B cell (primary cell): ENCODE measurements at regions of chr16 and their contacts with region 1.

Region 1: DNA sequence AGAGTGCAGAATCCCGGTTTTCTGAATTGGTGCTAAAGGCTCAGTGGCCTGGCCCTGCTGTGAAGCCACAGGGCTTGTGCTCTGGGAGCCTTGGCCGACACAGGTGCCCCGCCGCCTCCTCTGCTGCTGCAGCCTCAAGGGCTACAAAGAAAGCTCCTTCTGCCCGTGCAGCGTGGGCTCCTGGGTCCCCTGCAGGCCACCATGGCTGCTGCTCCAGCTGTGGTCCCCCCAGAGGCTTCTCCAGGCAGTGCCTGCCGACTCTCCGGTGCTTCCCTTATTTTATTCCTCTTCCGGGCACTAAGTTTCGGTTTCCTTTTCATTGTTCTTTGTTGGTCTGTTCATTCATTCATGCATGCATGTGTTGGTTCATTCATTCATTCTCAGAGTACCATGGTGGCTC is 53.1 kb downstream of the CMIP start:
- DNase-seq: peak; percentile 72
- ATAC-seq: no peak
- H3K4me3 ChIP-seq: peak overlapping the region in 1 of 5 experiments; percentile 3
- H3K4me3 Mint-ChIP-seq: peak overlapping the region; percentile 29
- H3K27ac ChIP-seq: no peak overlapping the region
- H3K27ac Mint-ChIP-seq: peak overlapping the region; percentile 6
- H3K4me1 ChIP-seq: peaks cover 63 to 79% of the 10 kb centered on the region in 2 donors
- H3K4me1 Mint-ChIP-seq: peaks cover 86% of the 10 kb centered on the region
- H3K27me3 ChIP-seq: no peaks in the 10 kb centered on the region
- H3K27me3 Mint-ChIP-seq: no peaks in the 10 kb centered on the region
- CTCF ChIP-seq: peak; percentile 31

Region 2: DNA sequence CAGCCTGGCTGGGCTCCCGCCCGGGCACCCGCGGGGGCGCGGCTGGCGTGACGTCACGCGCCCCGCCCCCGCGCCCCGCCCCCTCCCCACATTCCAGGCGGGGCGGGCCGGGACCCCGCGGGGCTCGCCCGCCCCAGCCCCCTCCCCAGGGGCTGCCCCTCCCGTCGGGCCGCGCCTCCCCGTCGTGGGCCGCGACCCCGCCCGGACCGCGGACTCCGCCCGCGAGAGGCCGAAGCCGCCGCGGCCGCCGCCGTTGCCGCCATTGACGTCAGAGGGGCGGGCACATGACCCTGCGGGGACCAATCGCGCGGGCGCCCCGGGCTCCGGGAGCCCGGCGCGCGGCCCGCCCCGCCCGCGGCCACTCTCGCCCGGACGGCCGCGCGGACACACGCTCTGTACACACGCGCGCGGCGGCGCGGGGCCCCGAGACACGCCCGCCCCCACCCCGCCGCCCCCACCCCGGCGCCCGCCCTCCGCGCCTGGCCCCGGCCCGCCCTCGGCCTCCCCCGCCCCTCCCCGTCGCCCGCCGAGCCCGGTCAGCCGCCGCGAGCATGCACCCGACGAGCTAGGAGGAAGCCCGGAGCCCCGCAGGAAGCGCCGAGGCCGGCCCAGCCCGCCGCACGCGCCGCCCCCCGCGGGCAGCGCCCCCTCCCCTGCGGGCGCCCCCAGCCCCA is 53.1 kb before region 1 on chr16 and contains the start of gene CMIP:
- CTCF ChIA-PET with region 1: interaction called, 7 read pairs
- POLR2A ChIA-PET with region 1: interaction called, 6 read pairs
- intact Hi-C with region 1: loop called (anchors 1 kb)
- DNase-seq: peak; percentile 91
- ATAC-seq: peak; percentile 85
- H3K4me3 ChIP-seq: peak within 1 kb of the TSS; percentile 68 to 90 (median 80)
- H3K4me3 Mint-ChIP-seq: peak within 1 kb of the TSS; percentile 91
- H3K27ac ChIP-seq: peak within 1 kb of the TSS; percentile 57 to 77
- H3K27ac Mint-ChIP-seq: peak within 1 kb of the TSS; percentile 91
- H3K4me1 ChIP-seq: peaks cover 36 to 47% of the 10 kb centered on the region in 2 donors
- H3K4me1 Mint-ChIP-seq: peaks cover 43% of the 10 kb centered on the region
- H3K27me3 ChIP-seq: no peaks in the 10 kb centered on the region
- H3K27me3 Mint-ChIP-seq: no peaks in the 10 kb centered on the region
- CTCF ChIP-seq: no peak
- total RNA-seq, gene CMIP: 155 and 168 TPM in 2 replicates

Region 3: GRCh38 chr16:81513204-81514040 is 15.7 kb after region 1 on chr16:
- CTCF ChIA-PET with region 1: interaction called, 10 read pairs
- POLR2A ChIA-PET with region 1: interaction called, 27 read pairs
- intact Hi-C with region 1: loop called (anchors 1 kb)
- DNase-seq: no peak
- ATAC-seq: peak; percentile 40
- H3K4me3 ChIP-seq: peak overlapping the region in 2 of 5 experiments; percentile 30 to 35
- H3K4me3 Mint-ChIP-seq: peak overlapping the region; percentile 81
- H3K27ac ChIP-seq: peak overlapping the region; percentile 43 to 59
- H3K27ac Mint-ChIP-seq: peak overlapping the region; percentile 88
- H3K4me1 ChIP-seq: peaks cover 34 to 41% of the 10 kb centered on the region in 2 donors
- H3K4me1 Mint-ChIP-seq: peaks cover 53% of the 10 kb centered on the region
- H3K27me3 ChIP-seq: no peaks in the 10 kb centered on the region
- H3K27me3 Mint-ChIP-seq: no peaks in the 10 kb centered on the region
- CTCF ChIP-seq: no peak

Region 4: GRCh38 chr16:81595604-81596292 is 98.1 kb after region 1 on chr16:
- CTCF ChIA-PET with region 1: no interaction called
- POLR2A ChIA-PET with region 1: no interaction called
- intact Hi-C with region 1: no loop called
- DNase-seq: no peak
- ATAC-seq: no peak
- H3K4me3 ChIP-seq: no peak overlapping the region
- H3K4me3 Mint-ChIP-seq: no peak overlapping the region
- H3K27ac ChIP-seq: no peak overlapping the region
- H3K27ac Mint-ChIP-seq: no peak overlapping the region
- H3K4me1 ChIP-seq: no peaks in the 10 kb centered on the region
- H3K4me1 Mint-ChIP-seq: peaks cover 24% of the 10 kb centered on the region
- H3K27me3 ChIP-seq: no peaks in the 10 kb centered on the region
- H3K27me3 Mint-ChIP-seq: no peaks in the 10 kb centered on the region
- CTCF ChIP-seq: no peak

Region 5: GRCh38 chr16:81715358-81716196 is 217.9 kb after region 1 on chr16:
- CTCF ChIA-PET with region 1: interaction called, 4 read pairs
- POLR2A ChIA-PET with region 1: interaction called, 3 read pairs
- intact Hi-C with region 1: loop called (anchors 5 kb)
- DNase-seq: peak; percentile 82
- ATAC-seq: peak; percentile 74
- H3K4me3 ChIP-seq: peak overlapping the region; percentile 15 to 63 (median 24)
- H3K4me3 Mint-ChIP-seq: peak overlapping the region; percentile 90
- H3K27ac ChIP-seq: peak overlapping the region; percentile 65 to 86
- H3K27ac Mint-ChIP-seq: peak overlapping the region; percentile 89
- H3K4me1 ChIP-seq: peaks cover 42 to 57% of the 10 kb centered on the region in 2 donors
- H3K4me1 Mint-ChIP-seq: peaks cover 50% of the 10 kb centered on the region
- H3K27me3 ChIP-seq: no peaks in the 10 kb centered on the region
- H3K27me3 Mint-ChIP-seq: no peaks in the 10 kb centered on the region
- CTCF ChIP-seq: no peak

Region 6: GRCh38 chr16:81778861-81779535 is 281.3 kb after region 1 on chr16 and contains the start of gene PLCG2:
- CTCF ChIA-PET with region 1: no interaction called
- POLR2A ChIA-PET with region 1: interaction called, 12 read pairs
- intact Hi-C with region 1: no loop called
- DNase-seq: peak; percentile 91
- ATAC-seq: peak; percentile 85
- H3K4me3 ChIP-seq: peak within 1 kb of the TSS; percentile 81 to 90 (median 83)
- H3K4me3 Mint-ChIP-seq: peak within 1 kb of the TSS; percentile 99
- H3K27ac ChIP-seq: peak within 1 kb of the TSS; percentile 72 to 91
- H3K27ac Mint-ChIP-seq: peak within 1 kb of the TSS; percentile 95
- H3K4me1 ChIP-seq: peaks cover 59 to 67% of the 10 kb centered on the region in 2 donors
- H3K4me1 Mint-ChIP-seq: peaks cover 72% of the 10 kb centered on the region
- H3K27me3 ChIP-seq: no peaks in the 10 kb centered on the region
- H3K27me3 Mint-ChIP-seq: no peaks in the 10 kb centered on the region
- CTCF ChIP-seq: no peak
- total RNA-seq, gene PLCG2: 812 and 852 TPM in 2 replicates